Sciatic nerve (tissue), 2 donors: ENCODE measurements at regions of chr7 and their contacts with region 1.

Region 1: GRCh38 chr7:26061688-26062150 is 90.3 kb upstream of the NFE2L3 start:
- DNase-seq: peak; percentile 77
- ATAC-seq: peak; percentile 56

Region 2: DNA sequence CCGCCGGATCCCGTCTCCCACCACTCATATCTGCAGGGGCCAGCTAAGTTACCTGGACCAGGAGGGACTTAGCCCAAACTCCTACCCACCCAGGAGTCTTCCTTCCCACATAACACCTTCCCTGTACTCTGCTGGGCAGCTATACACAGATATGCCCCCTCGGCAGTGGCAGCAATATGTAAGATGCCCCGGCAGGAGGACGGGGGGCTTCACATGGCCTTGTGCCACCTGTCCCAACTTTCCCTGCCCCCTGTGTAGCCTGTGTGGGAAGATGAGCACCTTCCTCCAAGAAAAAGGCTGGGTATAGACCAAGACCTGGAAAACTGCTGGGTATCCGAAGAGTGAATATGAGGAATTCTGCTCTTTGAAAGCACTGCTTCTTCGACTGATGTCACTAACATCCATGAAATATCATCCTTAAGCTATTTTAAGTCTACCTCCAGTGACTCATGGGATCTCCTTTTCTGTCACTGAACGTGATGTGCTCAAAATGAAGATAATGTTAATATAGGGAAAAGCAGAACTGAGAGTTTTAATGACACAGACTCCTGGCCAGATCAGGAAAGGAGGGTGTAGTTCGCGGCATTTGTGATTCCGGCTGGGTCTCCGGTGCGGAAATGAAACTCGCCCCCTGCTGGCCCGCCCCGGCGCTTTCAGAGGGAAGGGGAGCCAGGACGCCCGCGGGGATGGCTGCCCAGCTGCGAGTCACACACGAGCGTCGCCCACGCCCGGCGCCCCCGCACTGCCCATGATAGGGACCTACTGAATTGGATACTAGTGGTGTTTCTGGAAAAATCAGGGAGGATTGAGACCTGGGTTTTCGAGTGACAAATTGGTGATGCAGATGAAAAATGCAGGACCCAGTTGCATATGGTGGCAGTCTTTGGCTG is 166.6 kb before region 1 on chr7:
- intact Hi-C with region 1: loop called (anchors 5 kb)
- DNase-seq: peak; percentile 81
- ATAC-seq: peak; percentile 82